ENCODE measurements at regions of chrX and their contacts with region 1.

Region 1: DNA sequence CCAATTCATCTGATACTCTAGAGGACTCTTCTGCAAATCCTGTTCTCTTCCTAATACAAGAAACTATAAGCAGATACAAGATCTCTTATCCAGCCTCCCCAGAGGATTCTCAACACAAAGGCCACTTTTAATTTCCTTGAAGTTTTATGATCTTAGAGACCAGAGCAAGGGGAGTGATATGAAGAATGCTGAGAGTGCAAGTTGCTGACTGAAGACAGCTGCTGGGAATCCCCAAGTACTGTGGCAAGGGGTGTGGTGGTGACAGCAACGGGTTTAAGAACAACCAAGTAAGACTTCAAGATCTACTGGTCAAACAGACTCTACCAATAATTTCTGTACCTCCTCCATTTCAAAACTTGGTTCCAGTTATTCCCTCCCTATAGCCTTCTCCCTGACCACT is 7.0 kb downstream of the AMMECR1 start:
- DNase-seq: peak; percentile 64
- H3K4me3 Mint-ChIP-seq: no peak overlapping the region
- H3K27ac Mint-ChIP-seq: peak overlapping the region; percentile 8
- H3K4me1 Mint-ChIP-seq: peaks cover 62% of the 10 kb centered on the region
- H3K27me3 Mint-ChIP-seq: no peaks in the 10 kb centered on the region

Region 2: GRCh38 chrX:110226931-110227330 is 84.0 kb before region 1 on chrX:
- CTCF ChIA-PET with region 1: no interaction called
- POLR2A ChIA-PET with region 1: interaction called, 3 read pairs
- intact Hi-C with region 1: loop called (anchors 5 kb)
- DNase-seq: no peak
- H3K4me3 Mint-ChIP-seq: no peak overlapping the region
- H3K27ac Mint-ChIP-seq: no peak overlapping the region
- H3K4me1 Mint-ChIP-seq: peaks cover 48% of the 10 kb centered on the region
- H3K27me3 Mint-ChIP-seq: no peaks in the 10 kb centered on the region

Region 3: DNA sequence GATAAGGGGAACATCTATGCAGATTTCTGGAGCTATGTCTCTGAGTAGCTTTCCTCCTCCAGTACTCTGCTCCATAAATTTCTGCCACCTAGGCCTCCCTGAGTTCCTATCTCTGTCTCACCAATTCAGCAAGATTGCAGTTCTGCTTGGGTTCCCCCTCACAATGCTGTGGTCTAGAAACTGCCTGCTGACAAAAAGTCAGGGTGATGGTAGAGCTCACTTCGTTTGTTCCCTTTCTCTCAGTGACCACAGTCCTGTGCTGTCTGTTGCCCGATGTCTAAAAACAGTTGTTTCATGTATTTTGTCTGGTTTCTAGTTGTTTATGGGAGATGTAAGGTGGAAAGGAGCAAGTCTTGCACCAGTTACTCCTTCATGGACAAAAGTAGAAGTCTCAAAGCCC is 34.1 kb before region 1 on chrX:
- CTCF ChIA-PET with region 1: no interaction called
- POLR2A ChIA-PET with region 1: no interaction called
- intact Hi-C with region 1: loop called (anchors 5 kb)
- DNase-seq: no peak
- H3K4me3 Mint-ChIP-seq: no peak overlapping the region
- H3K27ac Mint-ChIP-seq: no peak overlapping the region
- H3K4me1 Mint-ChIP-seq: peaks cover 31% of the 10 kb centered on the region
- H3K27me3 Mint-ChIP-seq: no peaks in the 10 kb centered on the region

Region 4: GRCh38 chrX:110341189-110342035 is 30.5 kb after region 1 on chrX:
- CTCF ChIA-PET with region 1: no interaction called
- POLR2A ChIA-PET with region 1: no interaction called
- intact Hi-C with region 1: no loop called
- DNase-seq: no peak
- H3K4me3 Mint-ChIP-seq: no peak overlapping the region
- H3K27ac Mint-ChIP-seq: peak overlapping the region; percentile 69
- H3K4me1 Mint-ChIP-seq: peaks cover 7% of the 10 kb centered on the region
- H3K27me3 Mint-ChIP-seq: no peaks in the 10 kb centered on the region

Measured in activated CD4-positive, alpha-beta memory T cell treated with anti-CD3 and anti-CD28 coated beads for 36 hours (primary cell).